ENCODE measurements at regions of chr12 and their contacts with region 1.

Region 1: GRCh38 chr12:90987520-90987919 is 17.3 kb downstream of the EPYC start:
- DNase-seq: no peak
- CTCF ChIP-seq: no peak

Region 2: DNA sequence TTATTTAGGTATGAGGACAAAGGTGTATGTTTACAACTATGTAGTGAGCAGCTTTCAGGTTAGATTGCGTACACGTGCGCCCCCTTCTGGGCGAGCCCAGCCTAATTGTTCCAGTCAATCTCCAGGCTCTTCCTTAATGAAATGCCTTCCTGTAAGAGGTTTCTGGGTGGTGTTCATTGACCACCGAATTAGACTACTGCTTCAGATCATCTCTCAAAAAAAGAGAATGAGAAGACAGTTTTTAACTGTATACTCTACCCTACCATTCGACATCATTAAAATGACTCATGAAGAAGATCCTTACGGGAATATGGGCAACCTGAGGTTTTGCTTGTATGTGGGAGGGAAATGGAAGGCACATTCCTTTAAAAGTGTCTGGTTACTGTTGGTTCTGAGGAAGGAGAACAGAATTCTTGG is 121.6 kb after region 1 on chr12:
- in situ Hi-C with region 1: loop called (anchors 10 kb)
- DNase-seq: peak; percentile 14
- CTCF ChIP-seq: peak; percentile 66

Measured in GM13976 (cell line).